AG04449 (cell line): ENCODE measurements at regions of chr1 and their contacts with region 1.

Region 1: GRCh38 chr1:202576816-202577215 is 133.4 kb downstream of the SYT2 start:
- DNase-seq: no peak
- H3K4me3 ChIP-seq: no peak overlapping the region
- CTCF ChIP-seq: no peak

Region 2: GRCh38 chr1:201990427-201990826 is 586.4 kb before region 1 on chr1:
- CTCF ChIA-PET with region 1: no interaction called
- POLR2A ChIA-PET with region 1: no interaction called
- DNase-seq: no peak
- H3K4me3 ChIP-seq: no peak overlapping the region
- CTCF ChIP-seq: no peak

Region 3: DNA sequence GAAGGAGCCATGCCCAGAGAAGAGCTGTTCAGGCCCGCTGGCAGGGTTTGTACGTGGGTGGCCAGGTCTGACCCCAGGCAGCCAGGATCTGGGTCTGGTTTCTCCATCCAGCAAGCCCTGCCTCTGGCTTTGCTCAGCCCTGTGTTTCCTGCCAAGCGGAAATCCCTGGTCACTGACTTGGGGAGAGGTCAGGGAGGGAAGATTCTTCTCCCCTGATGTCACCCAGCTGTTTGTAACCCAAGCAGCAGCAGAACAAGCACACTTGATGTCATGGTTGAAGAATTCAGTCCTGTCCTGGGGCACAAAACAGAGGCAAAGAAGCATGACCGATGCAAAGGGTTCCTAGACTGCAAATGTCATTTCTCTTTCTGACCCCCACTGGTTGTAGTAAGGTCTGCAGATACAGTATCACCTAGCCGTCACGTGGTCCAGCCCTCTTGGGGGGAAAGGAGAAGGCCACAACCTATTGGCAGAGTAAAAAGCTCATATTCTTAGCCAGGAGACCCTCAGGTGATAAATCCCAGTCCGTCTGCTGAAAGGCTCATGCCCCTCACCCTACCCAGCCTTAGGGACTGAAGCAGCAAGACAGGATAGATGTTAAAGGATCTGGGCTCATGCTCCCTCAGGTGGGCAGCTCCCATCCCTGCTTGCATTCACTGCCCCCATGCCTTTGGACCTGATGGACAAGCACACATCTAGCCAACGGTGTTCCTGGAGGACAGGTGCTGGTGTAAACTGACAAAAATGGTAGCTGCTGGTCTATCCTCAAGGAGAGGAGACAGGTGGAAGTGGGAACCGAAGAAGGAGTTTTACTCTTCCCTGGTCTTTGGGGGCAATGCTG is 12.6 kb after region 1 on chr1:
- CTCF ChIA-PET with region 1: interaction called, 38 read pairs
- POLR2A ChIA-PET with region 1: interaction called, 3 read pairs
- DNase-seq: peak; percentile 97
- H3K4me3 ChIP-seq: no peak overlapping the region
- CTCF ChIP-seq: no peak

Region 4: GRCh38 chr1:202710070-202711045 is 133.5 kb after region 1 on chr1 and contains the start of gene SYT2:
- CTCF ChIA-PET with region 1: no interaction called
- POLR2A ChIA-PET with region 1: no interaction called
- DNase-seq: no peak
- H3K4me3 ChIP-seq: peak within 1 kb of the TSS; percentile 32
- CTCF ChIP-seq: no peak